ENCODE measurements at regions of chr3 and their contacts with region 1.

Region 1: GRCh38 chr3:76585794-76586392 is 454.0 kb upstream of the ROBO2 start:
- DNase-seq: peak; percentile 63
- H3K4me3 ChIP-seq: no peak overlapping the region
- H3K27ac ChIP-seq: no peak overlapping the region
- H3K4me1 ChIP-seq: no peaks in the 10 kb centered on the region
- H3K27me3 ChIP-seq: no peaks in the 10 kb centered on the region

Region 2: GRCh38 chr3:75814797-75815196 is 771.1 kb before region 1 on chr3:
- in situ Hi-C with region 1: loop called (anchors 25 kb)
- DNase-seq: no peak
- H3K4me3 ChIP-seq: no peak overlapping the region
- H3K27ac ChIP-seq: no peak overlapping the region
- H3K4me1 ChIP-seq: peaks cover 29% of the 10 kb centered on the region
- H3K27me3 ChIP-seq: no peaks in the 10 kb centered on the region